Activated CD8-positive, alpha-beta memory T cell treated with anti-CD3 and anti-CD28 coated beads, Interleukin-2, amount 10 ng/mL, durations not matched to agents 7 days and 5 days (primary cell): ENCODE measurements at regions of chr1 and their contacts with region 1.

Region 1: DNA sequence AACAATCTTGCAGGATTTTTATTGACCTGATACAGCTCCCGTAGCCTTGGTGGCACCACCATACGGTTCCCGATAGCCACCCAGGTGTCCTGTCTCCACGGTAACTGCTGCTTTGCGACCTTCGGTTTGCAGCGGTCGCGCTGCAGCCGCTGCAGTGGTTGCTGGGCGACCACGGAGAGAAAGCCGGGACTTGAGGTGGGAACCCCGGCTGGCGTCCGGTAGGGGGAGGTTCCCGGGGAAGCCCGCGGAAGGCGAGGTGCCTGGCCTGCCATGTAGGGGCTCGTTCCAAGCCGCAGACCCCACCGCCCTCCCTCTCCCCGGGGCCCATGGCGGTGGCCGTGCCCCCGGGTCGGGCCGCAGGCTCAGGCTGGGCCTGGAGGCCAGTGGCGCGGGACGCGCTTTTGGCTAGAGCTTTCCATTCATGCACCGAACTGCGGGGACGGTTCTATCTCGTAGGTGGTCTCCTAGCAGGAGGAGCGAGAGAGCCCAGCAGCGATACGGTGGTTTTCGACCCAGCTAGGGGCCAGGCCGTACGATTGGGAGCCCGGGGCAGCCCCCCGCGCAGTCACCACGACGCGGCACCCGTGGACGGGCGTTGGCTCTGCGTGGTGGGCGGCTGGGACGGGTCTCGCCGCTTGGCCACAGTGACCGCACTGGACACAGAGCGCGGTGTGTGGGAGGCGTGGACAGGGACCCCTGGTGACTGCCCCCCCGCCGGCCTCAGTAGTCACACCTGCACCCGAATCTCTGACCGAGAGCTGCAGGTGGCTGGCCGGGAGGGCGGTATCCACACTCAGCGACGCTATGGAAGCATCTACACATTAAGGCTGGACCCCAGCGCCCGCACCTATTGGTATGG is at the start of gene KLHDC9:
- DNase-seq: peak; percentile 90
- ATAC-seq: peak; percentile 77
- H3K4me3 Mint-ChIP-seq: peak within 1 kb of the TSS; percentile 89
- H3K27ac Mint-ChIP-seq: peak within 1 kb of the TSS; percentile 86
- H3K4me1 Mint-ChIP-seq: peaks cover 22% of the 10 kb centered on the region
- H3K27me3 Mint-ChIP-seq: no peaks in the 10 kb centered on the region
- total RNA-seq, gene KLHDC9: 0.52 to 0.85 TPM

Region 2: GRCh38 chr1:160981584-160982411 is 116.6 kb before region 1 on chr1:
- CTCF ChIA-PET with region 1: no interaction called
- DNase-seq: no peak
- ATAC-seq: peak; percentile 76
- H3K4me3 Mint-ChIP-seq: peak overlapping the region; percentile 52
- H3K27ac Mint-ChIP-seq: no peak overlapping the region
- H3K4me1 Mint-ChIP-seq: peaks cover 10% of the 10 kb centered on the region
- H3K27me3 Mint-ChIP-seq: peaks cover 41% of the 10 kb centered on the region

Region 3: GRCh38 chr1:160997323-160998038 is 101.0 kb before region 1 on chr1:
- CTCF ChIA-PET with region 1: interaction called, 26 read pairs
- DNase-seq: peak; percentile 66
- ATAC-seq: peak; percentile 73
- H3K4me3 Mint-ChIP-seq: no peak overlapping the region
- H3K27ac Mint-ChIP-seq: peak overlapping the region; percentile 21
- H3K4me1 Mint-ChIP-seq: peaks cover 19% of the 10 kb centered on the region
- H3K27me3 Mint-ChIP-seq: peaks cover 3% of the 10 kb centered on the region

Region 4: DNA sequence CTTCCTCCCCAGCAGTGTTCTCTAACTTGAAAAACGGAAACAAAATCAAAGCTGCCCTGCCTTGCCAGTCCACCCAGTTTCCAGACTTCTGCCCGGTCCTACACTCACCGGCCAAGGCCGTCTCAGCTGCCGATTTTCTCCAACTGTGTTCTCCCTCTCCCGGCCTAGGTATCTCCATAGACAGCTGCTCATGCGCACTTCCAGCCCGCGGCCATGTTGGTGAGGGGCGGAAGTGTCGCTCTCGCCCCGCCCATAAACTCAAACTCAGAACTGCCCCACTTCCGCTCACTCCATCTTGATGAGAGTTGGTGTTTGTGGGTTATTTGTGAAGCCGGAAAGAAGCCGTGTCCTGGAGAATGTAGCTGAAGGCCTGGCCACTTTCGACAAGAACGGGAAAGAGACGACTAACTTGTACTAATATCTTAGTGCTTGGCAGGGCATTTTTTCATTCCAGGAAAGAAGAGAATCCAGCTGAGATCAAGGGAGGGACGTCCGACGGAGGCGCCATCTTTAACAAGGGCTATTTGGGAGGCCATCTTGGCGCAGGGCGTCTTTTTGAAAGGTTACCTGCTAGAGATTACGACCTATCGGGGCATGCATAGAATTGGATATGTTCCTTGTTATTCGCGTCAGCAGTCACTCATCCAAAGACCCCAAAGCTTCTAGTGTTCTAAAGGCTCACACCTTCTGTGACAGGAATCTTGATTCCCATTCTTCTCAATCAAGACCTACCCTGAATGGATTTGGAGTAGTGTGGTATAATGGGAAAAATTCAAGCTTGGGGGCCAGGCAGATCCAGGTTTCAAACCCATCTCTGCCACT is 52.5 kb before region 1 on chr1 and contains the start of gene USF1:
- CTCF ChIA-PET with region 1: interaction called, 47 read pairs
- DNase-seq: peak; percentile 96
- ATAC-seq: peak; percentile 78
- H3K4me3 Mint-ChIP-seq: peak within 1 kb of the TSS; percentile 80
- H3K27ac Mint-ChIP-seq: peak within 1 kb of the TSS; percentile 99
- H3K4me1 Mint-ChIP-seq: peaks cover 54% of the 10 kb centered on the region
- H3K27me3 Mint-ChIP-seq: no peaks in the 10 kb centered on the region
- total RNA-seq, gene USF1: 75.4 to 90.1 TPM

Region 5: GRCh38 chr1:161082991-161083742 is 15.3 kb before region 1 on chr1:
- CTCF ChIA-PET with region 1: interaction called, 22 read pairs
- DNase-seq: no peak
- ATAC-seq: no peak
- H3K4me3 Mint-ChIP-seq: no peak overlapping the region
- H3K27ac Mint-ChIP-seq: no peak overlapping the region
- H3K4me1 Mint-ChIP-seq: peaks cover 12% of the 10 kb centered on the region
- H3K27me3 Mint-ChIP-seq: no peaks in the 10 kb centered on the region

Region 6: DNA sequence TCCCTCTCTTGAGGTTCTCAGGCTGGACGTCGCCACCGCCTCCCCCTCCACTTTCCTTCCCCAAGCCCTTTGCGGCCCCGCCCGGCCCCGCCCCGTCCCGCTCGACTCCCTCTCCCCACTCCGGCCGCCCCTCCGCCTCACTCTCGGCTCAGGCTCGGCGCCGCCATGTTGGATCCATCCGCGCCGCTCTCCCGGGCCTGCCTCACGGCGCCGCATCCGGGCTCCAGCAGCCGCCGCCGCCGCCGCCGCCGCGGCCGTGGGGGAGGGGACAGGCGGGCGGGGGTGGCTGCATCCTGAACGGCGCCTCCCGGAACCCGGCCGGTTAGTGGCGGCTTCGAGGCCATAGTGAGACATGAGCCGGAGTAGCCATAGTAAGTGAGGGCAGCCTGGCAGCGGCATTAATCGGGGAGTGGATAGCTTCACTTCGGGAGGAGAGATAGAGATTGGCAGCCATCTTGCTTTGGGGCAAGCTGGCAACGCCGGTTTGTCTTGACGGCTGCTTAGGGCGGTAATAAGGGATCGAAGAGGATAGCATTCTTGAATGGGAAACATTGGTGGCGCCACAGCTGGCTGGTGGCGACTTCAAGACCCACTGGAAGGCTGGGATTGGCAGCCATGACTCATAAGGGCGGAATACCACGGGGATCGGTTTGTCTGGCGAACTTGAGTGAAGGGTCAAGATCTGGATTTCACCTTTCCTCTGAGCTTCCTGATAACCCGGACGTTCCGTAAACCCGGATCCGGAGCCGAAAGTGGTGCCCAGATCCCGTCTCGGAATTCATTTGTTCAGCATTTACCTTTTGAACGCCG is 34.2 kb after region 1 on chr1 and contains the start of gene DEDD:
- CTCF ChIA-PET with region 1: interaction called, 21 read pairs
- DNase-seq: peak; percentile 95
- ATAC-seq: peak; percentile 95
- H3K4me3 Mint-ChIP-seq: no peak within 1 kb of the TSS
- H3K27ac Mint-ChIP-seq: no peak within 1 kb of the TSS
- H3K4me1 Mint-ChIP-seq: peaks cover 35% of the 10 kb centered on the region
- H3K27me3 Mint-ChIP-seq: no peaks in the 10 kb centered on the region
- total RNA-seq, gene DEDD: 37.1 to 40.6 TPM

Region 7: GRCh38 chr1:161159087-161159912 is 60.9 kb after region 1 on chr1 and contains the start of gene USP21:
- CTCF ChIA-PET with region 1: no interaction called
- DNase-seq: peak; percentile 95
- ATAC-seq: peak; percentile 95
- H3K4me3 Mint-ChIP-seq: peak within 1 kb of the TSS; percentile 76
- H3K27ac Mint-ChIP-seq: peak within 1 kb of the TSS; percentile 82
- H3K4me1 Mint-ChIP-seq: peaks cover 46% of the 10 kb centered on the region
- H3K27me3 Mint-ChIP-seq: no peaks in the 10 kb centered on the region
- total RNA-seq, gene USP21: 36.0 to 40.8 TPM

Region 8: DNA sequence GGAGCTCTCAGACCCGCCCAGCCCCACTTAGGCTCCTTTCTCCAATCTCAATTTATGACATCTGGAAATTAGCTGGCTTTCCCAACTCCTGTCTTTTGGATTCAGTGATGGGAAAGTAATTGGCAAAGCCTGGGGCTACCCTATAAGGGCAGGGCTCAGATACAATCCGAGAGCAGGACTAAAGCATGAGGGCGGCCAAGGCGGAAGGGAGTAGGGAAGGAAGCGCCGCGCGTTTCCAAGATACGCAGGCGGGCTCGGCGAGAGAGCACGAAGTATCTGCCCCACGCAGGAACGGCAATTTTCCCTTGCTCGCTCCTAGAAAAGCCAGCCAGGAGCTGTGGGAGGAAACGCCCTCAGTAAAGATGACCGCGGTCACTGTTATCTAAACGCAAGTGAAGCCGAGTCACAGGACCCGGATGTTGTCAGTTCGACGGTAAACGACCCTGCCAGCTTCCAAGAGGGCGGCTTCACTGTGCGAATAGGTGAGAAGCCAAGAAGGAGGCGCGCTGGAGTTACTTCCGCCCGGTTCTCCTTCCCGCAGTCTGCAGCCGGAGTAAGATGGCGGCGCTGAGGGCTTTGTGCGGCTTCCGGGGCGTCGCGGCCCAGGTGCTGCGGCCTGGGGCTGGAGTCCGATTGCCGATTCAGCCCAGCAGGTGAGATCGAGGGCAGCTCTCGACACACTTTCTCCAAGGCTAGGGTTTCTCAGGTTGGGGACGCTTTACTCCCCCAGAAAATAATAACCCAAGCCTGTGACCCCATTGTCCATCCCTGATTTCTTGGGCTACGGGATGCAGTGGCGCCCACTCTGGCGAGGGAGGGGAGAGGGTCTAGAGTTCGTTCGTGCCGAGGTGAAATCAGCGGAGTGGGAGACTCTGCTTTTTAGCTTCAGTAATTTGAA is 103.6 kb after region 1 on chr1 and contains the start of gene NDUFS2:
- CTCF ChIA-PET with region 1: no interaction called
- DNase-seq: peak; percentile 99
- ATAC-seq: peak; percentile 99
- H3K4me3 Mint-ChIP-seq: peak within 1 kb of the TSS; percentile 87
- H3K27ac Mint-ChIP-seq: peak within 1 kb of the TSS; percentile 95
- H3K4me1 Mint-ChIP-seq: peaks cover 64% of the 10 kb centered on the region
- H3K27me3 Mint-ChIP-seq: no peaks in the 10 kb centered on the region
- total RNA-seq, gene NDUFS2: 69.4 to 83.9 TPM

Region 9: DNA sequence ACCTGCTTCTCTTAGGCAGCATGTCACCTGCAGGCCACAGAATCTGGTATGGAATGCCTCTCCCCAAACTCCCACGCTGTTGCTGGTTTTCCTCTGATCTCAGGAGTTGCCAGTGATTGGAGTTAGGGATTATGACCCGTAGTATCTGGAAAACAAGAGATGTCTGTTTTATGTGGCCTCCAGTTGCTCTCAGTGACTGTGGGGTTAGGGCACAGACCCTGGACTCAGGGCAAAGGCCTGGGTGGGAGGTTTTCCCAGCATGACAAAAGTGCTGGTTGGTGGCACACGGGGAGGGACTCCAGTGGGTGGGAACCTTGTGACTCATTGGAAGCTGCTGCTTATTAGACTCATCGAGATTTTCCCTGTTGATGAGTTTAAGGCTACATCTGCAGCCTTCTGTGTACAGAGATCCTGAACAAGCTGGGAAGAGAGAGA is 139.6 kb after region 1 on chr1 and contains the start of gene NR1I3:
- CTCF ChIA-PET with region 1: no interaction called
- DNase-seq: no peak
- ATAC-seq: no peak
- H3K4me3 Mint-ChIP-seq: no peak within 1 kb of the TSS
- H3K27ac Mint-ChIP-seq: no peak within 1 kb of the TSS
- H3K4me1 Mint-ChIP-seq: no peaks in the 10 kb centered on the region
- H3K27me3 Mint-ChIP-seq: peaks cover 9% of the 10 kb centered on the region
- total RNA-seq, gene NR1I3: not detected